ENCODE measurements at regions of chr4 and their contacts with region 1.

Region 1: GRCh38 chr4:47836641-47837093 is 1.2 kb downstream of the CORIN start:
- DNase-seq: peak; percentile 90

Region 2: DNA sequence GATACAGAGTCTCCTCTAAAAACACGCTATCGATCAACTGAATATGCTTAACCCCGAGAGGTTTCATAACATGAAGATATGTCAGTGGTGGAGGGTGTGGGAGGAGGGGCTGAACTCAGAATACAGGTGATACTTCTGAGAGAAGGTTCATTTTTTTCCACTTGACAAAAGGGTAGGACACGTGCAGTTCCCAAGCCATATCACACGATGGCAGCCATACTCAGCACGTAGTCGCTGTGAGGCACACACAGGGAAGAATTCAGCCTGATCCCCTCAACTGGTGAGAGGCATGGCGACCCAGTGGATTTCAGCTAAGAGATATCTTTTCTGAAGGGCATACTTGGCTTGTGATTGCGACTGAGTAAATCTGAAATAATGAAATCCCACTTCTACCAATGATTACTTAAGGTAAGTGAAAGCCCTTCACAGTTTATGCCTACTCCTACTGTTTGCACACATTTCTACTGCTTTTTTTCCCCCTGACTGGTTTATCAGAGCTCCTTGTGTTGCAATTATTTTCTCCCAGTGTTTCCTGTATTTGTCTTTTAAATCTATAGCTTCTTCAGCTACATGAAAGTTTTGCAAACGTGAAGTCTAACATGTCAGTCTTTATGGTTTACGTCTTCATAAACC is 131.9 kb before region 1 on chr4:
- intact Hi-C with region 1: loop called (anchors 1 kb)
- DNase-seq: no peak

Measured in cardiac septum (tissue), 1 donor.